SK-N-SH (cell line): ENCODE measurements at regions of chr11 and their contacts with region 1.

Region 1: GRCh38 chr11:77619576-77620198 is 17.9 kb downstream of the CLNS1A start:
- DNase-seq: no peak
- H3K4me3 ChIP-seq: no peak overlapping the region
- H3K27ac ChIP-seq: no peak overlapping the region
- H3K4me1 ChIP-seq: peaks cover 0 to 9% of the 10 kb centered on the region in 2 experiments; a peak in 2 of 4 replicates
- H3K27me3 ChIP-seq: no peaks in the 10 kb centered on the region
- CTCF ChIP-seq: peak; percentile 86
- EP300 ChIP-seq: no peak
- RAD21 ChIP-seq: peak; percentile 71

Region 2: GRCh38 chr11:77309401-77310085 is 310.1 kb before region 1 on chr11:
- CTCF ChIA-PET with region 1: no interaction called
- POLR2A ChIA-PET with region 1: no interaction called
- DNase-seq: no peak
- H3K4me3 ChIP-seq: no peak overlapping the region
- H3K27ac ChIP-seq: no peak overlapping the region
- H3K4me1 ChIP-seq: no peaks in the 10 kb centered on the region
- H3K27me3 ChIP-seq: no peaks in the 10 kb centered on the region
- CTCF ChIP-seq: no peak
- EP300 ChIP-seq: no peak
- RAD21 ChIP-seq: no peak

Region 3: GRCh38 chr11:77472991-77473800 is 146.5 kb before region 1 on chr11:
- CTCF ChIA-PET with region 1: interaction called, 13 read pairs
- POLR2A ChIA-PET with region 1: no interaction called
- DNase-seq: peak; percentile 78
- H3K4me3 ChIP-seq: peak overlapping the region; percentile 67 to 69
- H3K27ac ChIP-seq: peak overlapping the region in 1 of 2 experiments; percentile 74; a peak in 2 of 4 replicates
- H3K4me1 ChIP-seq: peaks cover 0 to 5% of the 10 kb centered on the region in 2 experiments; a peak in 1 of 4 replicates
- H3K27me3 ChIP-seq: no peaks in the 10 kb centered on the region
- CTCF ChIP-seq: no peak
- EP300 ChIP-seq: no peak
- RAD21 ChIP-seq: no peak

Region 4: GRCh38 chr11:77602381-77603088 is 17.2 kb before region 1 on chr11:
- CTCF ChIA-PET with region 1: interaction called, 10 read pairs
- POLR2A ChIA-PET with region 1: no interaction called
- DNase-seq: no peak
- H3K4me3 ChIP-seq: no peak overlapping the region
- H3K27ac ChIP-seq: peak overlapping the region; percentile 47 to 85; a peak in 3 of 4 replicates
- H3K4me1 ChIP-seq: peaks cover 0 to 27% of the 10 kb centered on the region in 2 experiments; a peak in 2 of 4 replicates
- H3K27me3 ChIP-seq: no peaks in the 10 kb centered on the region
- CTCF ChIP-seq: no peak
- EP300 ChIP-seq: peak in 1 of 2 experiments; percentile 55; a peak in 1 of 4 replicates
- RAD21 ChIP-seq: no peak

Region 5: DNA sequence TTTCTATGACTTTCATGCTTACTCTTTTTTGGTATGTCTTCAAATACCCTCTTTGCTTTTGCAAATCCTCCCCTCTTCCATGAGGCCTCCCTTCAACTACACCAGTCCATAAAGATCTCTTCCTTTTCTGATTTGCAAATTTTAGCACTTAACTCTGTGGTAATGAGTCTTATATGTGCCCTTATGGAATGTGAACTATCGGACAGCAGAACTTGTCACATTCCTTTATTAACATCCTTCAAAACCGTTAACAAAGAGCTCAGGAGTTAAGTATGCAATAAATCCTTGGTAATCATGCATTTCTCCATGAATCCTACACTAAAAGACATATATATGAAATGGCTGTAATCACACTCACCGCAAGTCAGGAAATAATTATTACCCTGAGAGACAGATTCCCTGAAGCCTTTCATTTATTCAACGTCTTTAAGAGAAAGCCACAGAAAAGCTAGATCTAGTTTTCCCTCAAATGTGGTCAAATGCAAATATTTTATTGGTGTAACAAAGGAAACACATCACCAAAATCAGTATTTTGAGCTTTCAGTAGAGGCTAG is 10.5 kb after region 1 on chr11:
- CTCF ChIA-PET with region 1: interaction called, 11 read pairs
- POLR2A ChIA-PET with region 1: no interaction called
- DNase-seq: no peak
- H3K4me3 ChIP-seq: no peak overlapping the region
- H3K27ac ChIP-seq: no peak overlapping the region; a peak in 1 of 4 replicates
- H3K4me1 ChIP-seq: no peaks in the 10 kb centered on the region; a peak in 1 of 4 replicates
- H3K27me3 ChIP-seq: no peaks in the 10 kb centered on the region
- CTCF ChIP-seq: no peak
- EP300 ChIP-seq: no peak
- RAD21 ChIP-seq: no peak